PC-9 (cell line): ENCODE measurements at regions of chr18 and their contacts with region 1.

Region 1: GRCh38 chr18:11887305-11888262 is 20.5 kb downstream of the MPPE1 start:
- DNase-seq: peak; percentile 61 to 95
- H3K4me3 ChIP-seq: no peak overlapping the region
- H3K27ac ChIP-seq: peak overlapping the region; percentile 60
- H3K4me1 ChIP-seq: peaks cover 24% of the 10 kb centered on the region
- H3K27me3 ChIP-seq: no peaks in the 10 kb centered on the region
- CTCF ChIP-seq: no peak

Region 2: DNA sequence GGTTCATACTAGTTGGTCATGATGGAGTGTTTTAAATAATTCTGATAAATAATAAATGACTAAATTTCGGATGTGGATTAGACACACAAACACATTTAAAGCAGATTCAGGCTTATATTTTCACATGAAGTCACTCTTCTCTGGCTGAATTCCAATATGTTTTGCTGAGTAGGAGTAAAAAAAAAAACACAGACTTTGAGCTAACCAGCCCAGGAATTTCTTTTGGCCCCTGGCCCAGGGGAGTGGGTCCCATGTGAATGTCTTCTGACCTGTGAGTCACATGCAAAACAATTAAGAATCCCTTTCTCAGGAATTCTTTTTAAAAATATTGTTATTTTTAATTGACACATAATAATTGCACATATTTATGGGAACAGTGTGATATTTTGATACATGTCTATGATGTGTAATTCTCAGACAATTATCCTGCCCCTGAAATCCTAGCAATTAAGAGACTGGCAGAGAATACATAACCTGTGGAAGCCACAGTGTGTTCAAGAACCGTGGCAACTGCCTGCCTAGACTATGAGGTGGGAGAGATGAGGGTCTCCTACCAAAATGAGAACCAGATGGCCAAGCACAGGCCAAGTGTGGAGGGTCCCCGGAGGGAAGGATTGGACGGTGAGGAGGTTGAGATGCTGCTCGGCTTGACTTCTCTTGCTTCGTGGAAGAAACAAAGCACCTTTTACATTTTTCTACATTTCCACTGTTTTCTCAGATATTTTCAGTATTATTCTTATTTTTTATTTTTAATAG is 974.6 kb before region 1 on chr18:
- CTCF ChIA-PET with region 1: no interaction called
- POLR2A ChIA-PET with region 1: no interaction called
- intact Hi-C with region 1: no loop called
- DNase-seq: no peak
- H3K4me3 ChIP-seq: no peak overlapping the region
- H3K27ac ChIP-seq: no peak overlapping the region
- H3K4me1 ChIP-seq: no peaks in the 10 kb centered on the region
- H3K27me3 ChIP-seq: peaks cover 13% of the 10 kb centered on the region
- CTCF ChIP-seq: no peak

Region 3: DNA sequence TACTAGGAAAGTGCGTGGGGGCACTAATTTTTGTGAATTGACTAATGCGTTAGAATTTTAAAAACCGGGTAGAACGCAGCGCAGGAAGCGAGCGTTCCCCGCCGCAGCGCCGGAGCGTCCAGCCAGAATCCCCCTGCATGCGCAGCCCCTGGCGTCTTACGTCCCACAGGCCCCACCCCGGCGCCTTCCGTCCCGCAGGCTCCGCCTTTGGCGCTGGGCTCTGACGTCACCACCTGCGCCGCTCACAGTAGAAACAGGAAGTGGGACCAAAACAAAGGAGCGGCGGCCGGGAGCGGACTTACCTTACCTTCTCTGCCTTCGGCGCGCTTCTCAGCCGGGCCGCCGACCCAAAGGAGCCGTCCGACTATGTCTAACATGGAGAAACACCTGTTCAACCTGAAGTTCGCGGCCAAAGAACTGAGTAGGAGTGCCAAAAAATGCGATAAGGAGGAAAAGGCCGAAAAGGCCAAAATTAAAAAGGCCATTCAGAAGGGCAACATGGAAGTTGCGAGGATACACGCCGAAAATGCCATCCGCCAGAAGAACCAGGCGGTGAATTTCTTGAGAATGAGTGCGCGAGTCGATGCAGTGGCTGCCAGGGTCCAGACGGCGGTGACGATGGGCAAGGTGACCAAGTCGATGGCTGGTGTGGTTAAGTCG is 36.3 kb before region 1 on chr18 and contains the start of gene CHMP1B:
- CTCF ChIA-PET with region 1: no interaction called
- POLR2A ChIA-PET with region 1: interaction called, 5 read pairs
- intact Hi-C with region 1: loop called (anchors 1 kb)
- DNase-seq: peak; percentile 89 to 97
- H3K4me3 ChIP-seq: peak within 1 kb of the TSS; percentile 98
- H3K27ac ChIP-seq: peak within 1 kb of the TSS; percentile 83
- H3K4me1 ChIP-seq: peaks cover 39% of the 10 kb centered on the region
- H3K27me3 ChIP-seq: no peaks in the 10 kb centered on the region
- CTCF ChIP-seq: no peak
- total RNA-seq, gene CHMP1B: 68.0 and 73.6 TPM in 2 replicates

Region 4: DNA sequence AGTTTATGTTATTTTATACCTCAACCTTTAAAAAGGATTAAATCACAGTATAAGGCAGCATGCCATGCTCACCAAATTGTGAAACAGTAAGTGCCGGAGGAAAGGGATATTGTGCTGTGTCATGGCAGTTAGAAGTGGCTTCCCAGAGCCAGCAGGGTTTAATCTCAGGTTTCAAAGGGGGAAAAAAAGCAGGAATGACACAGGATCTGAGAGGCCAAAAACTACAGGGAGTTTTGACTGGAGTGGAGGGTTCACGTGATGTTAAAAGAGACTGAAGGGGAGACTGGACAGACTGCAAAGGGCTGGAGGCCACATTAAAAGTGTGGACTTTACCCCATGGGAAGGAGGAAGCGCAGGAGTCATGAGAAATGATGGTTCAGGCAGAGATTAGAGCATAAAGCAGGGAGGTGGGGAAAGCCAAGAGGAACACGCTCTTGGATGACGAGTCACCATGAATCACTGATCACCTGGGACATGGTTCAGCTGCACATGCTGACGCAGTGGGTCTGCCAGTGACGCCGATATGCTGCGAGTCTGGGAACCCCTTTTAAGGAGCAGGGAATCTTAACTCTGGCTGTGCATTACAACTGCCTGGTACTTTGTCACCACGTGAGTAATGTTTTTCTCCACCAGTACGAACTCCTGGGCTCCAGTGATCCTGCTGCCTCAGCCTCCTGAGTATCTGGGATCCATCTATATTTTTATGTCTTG is 30.3 kb before region 1 on chr18:
- CTCF ChIA-PET with region 1: no interaction called
- POLR2A ChIA-PET with region 1: interaction called, 5 read pairs
- intact Hi-C with region 1: loop called (anchors 1 kb)
- DNase-seq: peak; percentile 87 to 97
- H3K4me3 ChIP-seq: peak overlapping the region; percentile 43; the same call in 1 of the 2 replicates
- H3K27ac ChIP-seq: peak overlapping the region; percentile 97
- H3K4me1 ChIP-seq: peaks cover 62% of the 10 kb centered on the region
- H3K27me3 ChIP-seq: no peaks in the 10 kb centered on the region
- CTCF ChIP-seq: no peak

Region 5: GRCh38 chr18:11899063-11899462 is 11.5 kb after region 1 on chr18:
- CTCF ChIA-PET with region 1: no interaction called
- POLR2A ChIA-PET with region 1: interaction called, 19 read pairs
- intact Hi-C with region 1: no loop called
- DNase-seq: no peak
- H3K4me3 ChIP-seq: no peak overlapping the region
- H3K27ac ChIP-seq: no peak overlapping the region
- H3K4me1 ChIP-seq: peaks cover 5% of the 10 kb centered on the region
- H3K27me3 ChIP-seq: no peaks in the 10 kb centered on the region
- CTCF ChIP-seq: no peak